T-cell (primary cell): ENCODE measurements at regions of chr5 and their contacts with region 1.

Region 1: GRCh38 chr5:127959152-127959764 is 124.3 kb upstream of the SLC12A2 start:
- DNase-seq: peak in 6 of 35 experiments; percentile 2 to 22 (median 5)
- ATAC-seq: peak in 1 of 4 experiments; percentile 4
- H3K4me3 ChIP-seq: no peak overlapping the region
- H3K4me3 Mint-ChIP-seq: no peak overlapping the region
- H3K27ac ChIP-seq: no peak overlapping the region
- H3K27ac Mint-ChIP-seq: no peak overlapping the region
- H3K4me1 ChIP-seq: peaks cover 0 to 12% of the 10 kb centered on the region in 2 experiments
- H3K4me1 Mint-ChIP-seq: peaks cover 19 to 26% (median 25%) of the 10 kb centered on the region in 3 donors
- H3K27me3 ChIP-seq: no peaks in the 10 kb centered on the region
- H3K27me3 Mint-ChIP-seq: no peaks in the 10 kb centered on the region

Region 2: DNA sequence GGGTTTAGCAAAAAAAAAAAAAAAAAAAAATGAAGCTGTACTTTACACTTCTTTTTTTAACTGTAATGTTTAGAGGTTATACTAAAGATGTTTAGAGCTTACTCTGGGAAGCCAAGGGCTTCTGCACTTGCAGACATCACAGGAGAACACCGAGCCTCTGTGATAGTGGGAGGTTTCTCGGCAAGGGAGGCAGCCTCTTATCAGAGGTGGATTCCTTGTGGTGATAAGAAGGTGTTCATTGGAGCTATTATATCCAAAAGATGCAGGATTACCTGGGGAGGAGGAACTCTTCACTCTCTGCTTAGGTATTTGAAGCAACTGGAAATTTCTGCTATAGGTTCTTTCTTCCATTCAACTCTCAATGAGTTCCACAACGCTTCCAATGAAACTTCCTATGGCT is 46.8 kb before region 1 on chr5:
- CTCF ChIA-PET with region 1: interaction called in 1 of 2 experiments, 10 read pairs
- POLR2A ChIA-PET with region 1: no interaction called
- DNase-seq: no peak
- ATAC-seq: no peak
- H3K4me3 ChIP-seq: no peak overlapping the region
- H3K4me3 Mint-ChIP-seq: no peak overlapping the region
- H3K27ac ChIP-seq: no peak overlapping the region
- H3K27ac Mint-ChIP-seq: no peak overlapping the region
- H3K4me1 ChIP-seq: peaks cover 0 to 2% of the 10 kb centered on the region in 2 experiments
- H3K4me1 Mint-ChIP-seq: peaks cover 7 to 9% (median 8%) of the 10 kb centered on the region in 3 donors
- H3K27me3 ChIP-seq: no peaks in the 10 kb centered on the region
- H3K27me3 Mint-ChIP-seq: peaks cover 2 to 3% of the 10 kb centered on the region in 2 donors